GM12878 (cell line): ENCODE measurements at regions of chr11 and their contacts with region 1.

Region 1: DNA sequence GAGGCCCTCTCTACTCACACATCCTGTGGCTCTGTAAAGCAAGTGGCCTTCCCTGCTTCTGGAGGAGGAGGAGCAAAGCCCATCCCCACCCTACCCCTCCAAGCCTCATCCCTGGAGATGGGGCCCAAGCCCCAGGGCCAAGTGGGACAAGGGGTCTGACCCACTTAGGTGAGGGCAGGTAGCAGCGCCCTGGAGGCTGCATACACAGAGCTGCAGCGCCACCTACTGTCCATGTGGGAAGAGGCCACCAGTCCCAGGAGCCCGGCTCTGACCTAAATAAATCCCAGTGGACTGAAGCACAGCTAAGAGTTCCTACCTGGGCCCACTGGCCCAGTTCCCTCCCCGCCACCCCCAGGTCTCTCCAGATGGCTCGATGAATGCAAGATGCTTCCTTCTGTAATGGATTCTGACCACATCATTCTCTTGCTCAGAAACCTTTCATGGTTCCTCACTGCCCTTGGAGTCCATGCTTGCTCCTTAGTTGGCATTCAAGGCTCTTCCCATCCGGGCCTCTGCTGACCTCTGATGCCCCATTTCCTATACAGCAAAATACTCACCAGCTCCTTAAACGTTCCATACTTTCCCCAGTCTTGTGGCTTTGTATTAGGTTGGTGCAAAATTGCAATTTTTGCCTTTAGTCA is 62.1 kb downstream of the THAP12 start:
- DNase-seq: peak; percentile 30
- ATAC-seq: peak; percentile 99
- H3K4me3 ChIP-seq: no peak overlapping the region
- H3K27ac ChIP-seq: no peak overlapping the region
- H3K4me1 ChIP-seq: no peaks in the 10 kb centered on the region
- H3K27me3 ChIP-seq: peaks cover 16 to 27% of the 10 kb centered on the region in 2 experiments
- CTCF ChIP-seq: peak; percentile 92 to 98 (median 92)
- EP300 ChIP-seq: no peak
- POLR2A ChIP-seq: no peak
- RAD21 ChIP-seq: peak; percentile 95

Region 2: GRCh38 chr11:75896843-75897419 is 421.9 kb before region 1 on chr11:
- CTCF ChIA-PET with region 1: interaction called, 5 read pairs
- POLR2A ChIA-PET with region 1: no interaction called
- RAD21 ChIA-PET with region 1: interaction called, 4 read pairs
- SMC1A ChIA-PET with region 1: interaction called, 3 read pairs
- in situ Hi-C with region 1: loop called (anchors 5 kb)
- intact Hi-C with region 1: loop called (anchors 5 kb)
- DNase-seq: no peak
- ATAC-seq: peak; percentile 46
- H3K4me3 ChIP-seq: no peak overlapping the region
- H3K27ac ChIP-seq: no peak overlapping the region
- H3K4me1 ChIP-seq: peaks cover 8% of the 10 kb centered on the region
- H3K27me3 ChIP-seq: no peaks in the 10 kb centered on the region
- CTCF ChIP-seq: peak; percentile 55 to 62 (median 57)
- EP300 ChIP-seq: no peak
- POLR2A ChIP-seq: no peak
- RAD21 ChIP-seq: peak; percentile 77

Region 3: GRCh38 chr11:75903276-75903675 is 415.6 kb before region 1 on chr11:
- CTCF ChIA-PET with region 1: interaction called, 5 read pairs
- POLR2A ChIA-PET with region 1: no interaction called
- RAD21 ChIA-PET with region 1: no interaction called
- SMC1A ChIA-PET with region 1: no interaction called
- in situ Hi-C with region 1: loop called (anchors 5 kb)
- intact Hi-C with region 1: loop called (anchors 5 kb)
- DNase-seq: no peak
- ATAC-seq: no peak
- H3K4me3 ChIP-seq: no peak overlapping the region
- H3K27ac ChIP-seq: no peak overlapping the region
- H3K4me1 ChIP-seq: peaks cover 19% of the 10 kb centered on the region
- H3K27me3 ChIP-seq: no peaks in the 10 kb centered on the region
- CTCF ChIP-seq: no peak
- EP300 ChIP-seq: no peak
- POLR2A ChIP-seq: no peak
- RAD21 ChIP-seq: no peak

Region 4: DNA sequence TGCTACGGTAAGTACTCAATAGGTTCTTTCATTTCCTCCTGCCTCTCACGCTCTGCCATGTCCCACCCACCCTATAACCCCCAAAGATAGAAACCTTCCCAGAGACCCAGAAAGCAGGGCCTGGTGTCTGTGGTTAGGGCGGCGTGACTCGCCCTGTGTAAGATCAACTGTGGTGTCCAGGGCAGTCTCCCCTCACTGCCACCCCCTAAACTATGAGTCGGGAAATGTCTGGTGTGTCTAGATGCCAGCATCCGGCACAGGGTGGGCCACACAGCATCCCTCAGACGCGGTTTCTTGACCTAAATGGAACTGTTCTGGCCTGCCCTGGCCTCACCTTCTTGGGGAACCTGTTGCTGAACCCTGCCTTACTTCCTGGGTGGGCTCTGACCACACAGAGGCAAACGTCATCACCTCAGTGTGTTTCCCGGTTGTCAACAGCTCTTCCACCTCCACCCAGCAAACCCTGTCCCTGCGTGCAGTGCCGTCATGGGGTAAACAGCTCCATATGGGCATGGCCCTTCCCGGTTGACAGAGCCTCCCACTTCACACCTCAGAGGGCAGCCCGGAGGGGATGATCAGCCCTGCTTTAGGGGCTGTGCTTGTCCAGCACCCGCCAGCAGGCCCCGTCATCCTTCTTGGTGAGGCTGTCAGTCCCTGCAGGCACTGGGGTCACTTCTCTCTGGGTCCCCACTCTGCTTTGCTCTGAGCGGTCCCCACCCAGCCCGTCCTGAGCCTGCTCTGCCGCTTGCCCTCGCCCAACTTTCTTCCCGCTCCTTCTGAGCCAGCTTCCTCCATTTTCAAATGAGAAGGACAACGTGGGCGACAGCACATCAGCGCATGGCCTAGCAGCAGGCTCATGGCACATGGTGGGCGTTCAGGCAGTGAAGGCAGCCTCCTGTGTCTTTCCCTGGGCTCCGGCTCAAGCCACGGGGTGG is 118.6 kb before region 1 on chr11:
- CTCF ChIA-PET with region 1: interaction called, 131 read pairs
- POLR2A ChIA-PET with region 1: no interaction called
- RAD21 ChIA-PET with region 1: interaction called, 147 read pairs
- SMC1A ChIA-PET with region 1: no interaction called
- in situ Hi-C with region 1: loop called (anchors 5 kb)
- intact Hi-C with region 1: no loop called
- DNase-seq: no peak
- ATAC-seq: no peak
- H3K4me3 ChIP-seq: no peak overlapping the region
- H3K27ac ChIP-seq: no peak overlapping the region
- H3K4me1 ChIP-seq: no peaks in the 10 kb centered on the region
- H3K27me3 ChIP-seq: peaks cover under 1 to 9% of the 10 kb centered on the region in 2 experiments; a peak in 3 of 4 replicates
- CTCF ChIP-seq: no peak
- EP300 ChIP-seq: no peak
- POLR2A ChIP-seq: no peak
- RAD21 ChIP-seq: no peak

Region 5: GRCh38 chr11:76361374-76361773 is 42.5 kb after region 1 on chr11:
- CTCF ChIA-PET with region 1: no interaction called
- POLR2A ChIA-PET with region 1: no interaction called
- RAD21 ChIA-PET with region 1: no interaction called
- SMC1A ChIA-PET with region 1: no interaction called
- in situ Hi-C with region 1: no loop called
- intact Hi-C with region 1: no loop called
- DNase-seq: no peak
- ATAC-seq: no peak
- H3K4me3 ChIP-seq: no peak overlapping the region
- H3K27ac ChIP-seq: no peak overlapping the region
- H3K4me1 ChIP-seq: no peaks in the 10 kb centered on the region
- H3K27me3 ChIP-seq: no peaks in the 10 kb centered on the region
- CTCF ChIP-seq: no peak
- EP300 ChIP-seq: no peak
- POLR2A ChIP-seq: no peak
- RAD21 ChIP-seq: no peak

Region 6: DNA sequence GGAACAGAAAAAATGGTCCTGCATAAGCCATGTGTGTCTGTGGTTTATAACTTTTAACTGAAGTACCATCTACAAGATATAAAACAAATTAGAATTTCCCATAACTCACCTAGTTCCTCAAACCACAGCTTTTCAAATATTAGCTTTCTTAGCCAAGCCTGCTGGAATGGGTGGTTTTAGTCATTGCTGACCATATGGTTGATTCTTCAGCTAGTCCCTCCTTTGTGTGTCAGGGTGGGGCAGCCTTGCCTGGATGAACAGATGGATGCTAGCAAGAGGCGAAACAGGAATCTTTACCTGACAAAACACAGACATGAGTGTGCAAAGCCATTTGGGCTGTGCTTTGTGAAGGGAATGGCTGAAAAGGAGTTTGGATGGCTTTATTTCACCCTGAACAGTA is 708.4 kb after region 1 on chr11:
- CTCF ChIA-PET with region 1: no interaction called
- POLR2A ChIA-PET with region 1: no interaction called
- RAD21 ChIA-PET with region 1: no interaction called
- SMC1A ChIA-PET with region 1: no interaction called
- in situ Hi-C with region 1: no loop called
- intact Hi-C with region 1: no loop called
- DNase-seq: no peak
- ATAC-seq: no peak
- H3K4me3 ChIP-seq: no peak overlapping the region
- H3K27ac ChIP-seq: no peak overlapping the region
- H3K4me1 ChIP-seq: no peaks in the 10 kb centered on the region
- H3K27me3 ChIP-seq: no peaks in the 10 kb centered on the region; a peak in 1 of 4 replicates
- CTCF ChIP-seq: no peak
- EP300 ChIP-seq: no peak
- POLR2A ChIP-seq: no peak
- RAD21 ChIP-seq: no peak